Mammary epithelial cell (primary cell): ENCODE measurements at regions of chr1 and their contacts with region 1.

Region 1: DNA sequence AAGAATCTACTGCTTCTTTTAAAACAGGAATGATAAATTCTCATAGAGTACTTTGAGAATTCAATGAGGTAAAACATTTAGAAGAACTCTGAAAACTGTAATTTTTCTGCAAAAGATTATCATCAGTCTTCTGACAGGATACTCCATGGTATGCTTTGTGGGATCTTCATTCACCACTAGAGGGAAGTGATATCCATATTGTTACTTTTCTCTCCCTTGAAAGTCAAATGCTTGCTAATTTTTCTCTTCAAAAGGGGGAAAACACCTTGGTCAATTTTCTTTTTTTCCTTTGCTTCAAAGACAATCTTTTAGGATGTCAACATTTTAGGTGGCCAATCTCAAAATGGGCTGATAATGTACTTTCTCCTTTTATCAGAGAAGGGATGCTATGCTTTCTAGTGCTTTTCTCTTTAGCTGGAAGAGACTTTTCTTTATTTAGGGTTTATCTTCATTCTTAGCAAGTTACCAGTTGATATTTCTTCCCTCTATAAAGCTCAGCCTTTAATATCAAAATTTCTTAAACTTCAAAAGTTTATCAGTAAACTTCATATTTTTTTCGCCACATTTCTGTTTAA is 95.5 kb downstream of the NEGR1 start:
- DNase-seq: peak; percentile 19
- H3K4me3 ChIP-seq: no peak overlapping the region
- H3K27ac ChIP-seq: no peak overlapping the region
- H3K4me1 ChIP-seq: no peaks in the 10 kb centered on the region
- H3K27me3 ChIP-seq: no peaks in the 10 kb centered on the region
- CTCF ChIP-seq: peak; percentile 53 to 72

Region 2: DNA sequence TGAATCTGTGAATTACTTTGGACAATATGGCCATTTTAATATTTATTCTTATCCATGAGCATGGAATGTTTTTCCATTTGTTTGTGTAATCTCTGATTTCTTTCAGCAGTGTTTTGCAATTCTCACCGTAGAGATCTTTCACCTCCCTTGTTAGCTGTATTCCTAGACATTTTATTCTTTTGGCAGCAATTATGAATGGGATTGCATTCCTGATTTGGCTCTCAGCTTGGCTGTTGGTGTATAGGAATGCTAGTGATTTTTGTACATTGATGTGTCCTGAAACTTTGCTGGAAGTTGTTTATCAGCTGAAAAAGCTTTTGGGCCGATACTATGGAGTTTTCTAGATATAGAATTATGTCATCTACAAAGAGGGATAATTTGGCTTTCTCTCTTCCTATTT is 139.7 kb after region 1 on chr1:
- CTCF ChIA-PET with region 1: no interaction called
- dilution Hi-C with region 1: no loop called
- in situ Hi-C with region 1: no loop called
- intact Hi-C with region 1: loop called (anchors 5 kb)
- DNase-seq: no peak
- H3K4me3 ChIP-seq: no peak overlapping the region
- H3K27ac ChIP-seq: no peak overlapping the region
- H3K4me1 ChIP-seq: no peaks in the 10 kb centered on the region
- H3K27me3 ChIP-seq: no peaks in the 10 kb centered on the region
- CTCF ChIP-seq: no peak

Region 3: DNA sequence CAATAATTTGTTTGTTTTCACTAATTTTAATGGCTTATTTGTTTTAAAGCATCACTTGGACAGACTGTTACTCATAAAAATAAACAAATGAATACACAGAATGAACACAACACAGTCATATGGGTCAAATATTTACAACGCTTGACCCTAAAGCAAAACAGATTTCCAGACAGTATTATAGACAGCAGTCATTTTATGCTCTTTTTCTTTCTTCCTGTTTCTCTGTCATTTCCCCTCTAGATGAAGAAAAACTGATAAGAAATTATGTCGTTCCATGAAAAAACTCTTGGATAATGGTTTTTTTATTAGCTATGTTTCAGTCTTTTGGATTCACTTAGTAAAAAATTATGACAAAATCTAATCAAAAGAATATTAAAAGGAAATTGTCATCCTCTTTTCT is 392.8 kb after region 1 on chr1:
- CTCF ChIA-PET with region 1: no interaction called
- dilution Hi-C with region 1: no loop called
- in situ Hi-C with region 1: loop called in 1 of 2 experiments (anchors 25 kb)
- intact Hi-C with region 1: no loop called
- DNase-seq: no peak
- H3K4me3 ChIP-seq: no peak overlapping the region
- H3K27ac ChIP-seq: no peak overlapping the region
- H3K4me1 ChIP-seq: no peaks in the 10 kb centered on the region
- H3K27me3 ChIP-seq: no peaks in the 10 kb centered on the region
- CTCF ChIP-seq: no peak

Region 4: DNA sequence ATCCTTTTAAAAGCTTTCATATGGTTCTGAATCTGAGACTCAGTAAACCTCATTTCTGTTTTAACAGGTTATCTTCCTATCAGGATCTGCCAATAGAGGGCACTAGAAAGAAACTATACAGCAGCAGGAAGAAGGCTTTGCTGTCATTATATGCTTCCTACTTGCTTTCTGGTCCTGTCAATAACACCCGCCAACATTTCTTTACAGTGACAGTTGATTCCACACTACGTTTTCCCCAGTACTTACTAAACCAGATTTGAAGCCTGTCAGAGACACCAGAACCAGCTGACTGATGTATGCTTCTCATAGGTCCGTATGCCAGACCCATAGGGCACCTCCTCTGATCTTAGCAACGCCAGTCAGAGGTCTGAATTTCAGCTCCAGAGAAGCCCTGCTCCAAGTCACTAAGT is 436.5 kb after region 1 on chr1:
- CTCF ChIA-PET with region 1: interaction called, 3 read pairs
- dilution Hi-C with region 1: no loop called
- in situ Hi-C with region 1: no loop called
- intact Hi-C with region 1: loop called (anchors 5 kb)
- DNase-seq: peak; percentile 35
- H3K4me3 ChIP-seq: no peak overlapping the region
- H3K27ac ChIP-seq: no peak overlapping the region
- H3K4me1 ChIP-seq: no peaks in the 10 kb centered on the region
- H3K27me3 ChIP-seq: no peaks in the 10 kb centered on the region
- CTCF ChIP-seq: peak; percentile 61 to 73